CD14-positive monocyte (primary cell): ENCODE measurements at regions of chr9 and their contacts with region 1.

Region 1: GRCh38 chr9:109244157-109245132 is 76.4 kb downstream of the EPB41L4B start:
- DNase-seq: peak; percentile 37 to 48 (median 45)
- H3K4me3 ChIP-seq: no peak overlapping the region
- H3K4me3 Mint-ChIP-seq: peak overlapping the region in 1 of 2 donors; percentile 44
- H3K27ac ChIP-seq: no peak overlapping the region
- H3K27ac Mint-ChIP-seq: no peak overlapping the region
- H3K4me1 ChIP-seq: no peaks in the 10 kb centered on the region
- H3K4me1 Mint-ChIP-seq: no peaks in the 10 kb centered on the region
- H3K27me3 ChIP-seq: peaks cover 22 to 32% of the 10 kb centered on the region in 2 donors
- H3K27me3 Mint-ChIP-seq: peaks cover 33 to 35% (median 34%) of the 10 kb centered on the region in 3 donors
- CTCF ChIP-seq: peak; percentile 97

Region 2: DNA sequence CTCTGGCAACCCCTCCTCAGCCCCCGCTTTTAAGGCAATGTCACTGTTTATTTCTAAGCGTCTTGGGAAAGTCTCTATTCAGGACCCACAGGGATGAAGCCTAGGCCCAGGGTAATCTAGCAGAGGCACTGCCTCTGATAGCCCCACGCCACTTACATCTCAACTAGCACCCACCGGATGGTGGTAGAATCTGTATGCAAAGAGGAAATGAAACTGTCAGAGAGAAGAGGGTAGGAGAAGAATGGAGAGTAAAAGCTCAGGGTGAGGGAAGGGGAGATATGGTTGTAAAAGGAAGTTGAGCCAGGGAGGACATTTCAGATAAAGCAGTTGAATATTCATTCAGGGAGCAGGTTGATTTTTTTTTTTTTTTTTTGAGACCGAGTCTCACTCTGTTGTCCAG is 80.4 kb before region 1 on chr9:
- intact Hi-C with region 1: no loop called
- DNase-seq: no peak
- H3K4me3 ChIP-seq: no peak overlapping the region
- H3K4me3 Mint-ChIP-seq: peak overlapping the region in 1 of 2 donors; percentile 40
- H3K27ac ChIP-seq: no peak overlapping the region
- H3K27ac Mint-ChIP-seq: peak overlapping the region in 1 of 7 donors; percentile 31
- H3K4me1 ChIP-seq: no peaks in the 10 kb centered on the region
- H3K4me1 Mint-ChIP-seq: peaks cover 5% of the 10 kb centered on the region
- H3K27me3 ChIP-seq: peaks cover 34 to 44% of the 10 kb centered on the region in 2 donors
- H3K27me3 Mint-ChIP-seq: peaks cover 49 to 74% (median 53%) of the 10 kb centered on the region in 3 donors
- CTCF ChIP-seq: no peak

Region 3: GRCh38 chr9:109320742-109321448 is 76.5 kb after region 1 on chr9 and contains the start of gene EPB41L4B:
- intact Hi-C with region 1: loop called in 1 of 2 experiments (anchors 2 kb)
- DNase-seq: peak; percentile 35 to 41 (median 40)
- H3K4me3 ChIP-seq: no peak within 1 kb of the TSS
- H3K4me3 Mint-ChIP-seq: peak within 1 kb of the TSS; percentile 77 to 91
- H3K27ac ChIP-seq: no peak within 1 kb of the TSS
- H3K27ac Mint-ChIP-seq: no peak within 1 kb of the TSS
- H3K4me1 ChIP-seq: peaks cover 0 to 17% of the 10 kb centered on the region in 2 donors
- H3K4me1 Mint-ChIP-seq: peaks cover 16% of the 10 kb centered on the region
- H3K27me3 ChIP-seq: peaks cover 64 to 71% of the 10 kb centered on the region in 2 donors
- H3K27me3 Mint-ChIP-seq: peaks cover 51 to 73% (median 68%) of the 10 kb centered on the region in 3 donors
- CTCF ChIP-seq: peak; percentile 80
- polyA plus RNA-seq, gene EPB41L4B: not detected

Region 4: DNA sequence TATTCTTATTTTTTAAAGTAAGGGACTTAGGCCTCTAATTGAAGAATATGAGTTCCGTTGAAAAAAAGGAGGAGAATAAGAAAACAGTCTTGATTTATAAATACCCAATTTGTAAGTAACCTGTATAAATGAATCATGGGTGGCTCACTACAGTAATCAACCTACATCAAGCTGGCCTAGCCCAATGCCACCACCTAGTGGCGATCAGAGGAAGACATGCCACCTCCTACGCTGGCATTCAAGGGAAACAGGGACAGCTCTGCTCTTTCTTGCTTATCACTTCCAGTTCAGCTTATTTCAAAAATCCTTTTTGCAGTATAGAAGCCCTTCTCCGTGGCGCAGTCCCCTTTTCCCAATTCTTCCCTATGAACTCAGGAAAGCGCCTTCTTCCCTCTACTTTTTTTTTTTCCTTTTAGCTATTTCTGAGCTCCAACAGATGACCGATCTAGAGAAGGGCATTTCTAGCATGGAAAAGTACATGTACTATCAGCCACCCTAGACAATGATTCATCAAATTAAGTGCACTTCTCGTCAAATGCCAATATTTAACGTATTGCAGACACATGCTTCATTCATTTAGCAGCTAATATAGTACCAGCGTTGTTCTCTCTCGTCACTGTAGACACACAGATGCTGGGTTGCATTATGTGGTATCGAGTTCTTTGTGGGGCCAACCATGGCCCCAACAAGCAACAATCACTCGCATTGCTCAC is 225.4 kb after region 1 on chr9:
- intact Hi-C with region 1: loop called in 1 of 2 experiments (anchors 10 kb)
- DNase-seq: peak; percentile 29 to 47 (median 38)
- H3K4me3 ChIP-seq: no peak overlapping the region
- H3K4me3 Mint-ChIP-seq: peak overlapping the region in 1 of 2 donors; percentile 51
- H3K27ac ChIP-seq: no peak overlapping the region
- H3K27ac Mint-ChIP-seq: no peak overlapping the region
- H3K4me1 ChIP-seq: no peaks in the 10 kb centered on the region
- H3K4me1 Mint-ChIP-seq: peaks cover 2% of the 10 kb centered on the region
- H3K27me3 ChIP-seq: peaks cover 54 to 88% of the 10 kb centered on the region in 2 donors
- H3K27me3 Mint-ChIP-seq: peaks cover 76 to 84% (median 79%) of the 10 kb centered on the region in 3 donors
- CTCF ChIP-seq: peak; percentile 88